PC-9 (cell line): ENCODE measurements at regions of chr22 and their contacts with region 1.

Region 1: GRCh38 chr22:37077884-37078485 is 26.4 kb downstream of the KCTD17 start:
- DNase-seq: peak in 1 of 2 experiments; percentile 74
- H3K4me3 ChIP-seq: no peak overlapping the region
- H3K27ac ChIP-seq: no peak overlapping the region
- H3K4me1 ChIP-seq: no peaks in the 10 kb centered on the region
- H3K27me3 ChIP-seq: peaks cover 43% of the 10 kb centered on the region
- CTCF ChIP-seq: peak; percentile 100

Region 2: GRCh38 chr22:36781656-36782627 is 296.0 kb before region 1 on chr22:
- CTCF ChIA-PET with region 1: no interaction called
- POLR2A ChIA-PET with region 1: no interaction called
- intact Hi-C with region 1: loop called (anchors 1 kb)
- DNase-seq: peak; percentile 80 to 93
- H3K4me3 ChIP-seq: no peak overlapping the region
- H3K27ac ChIP-seq: no peak overlapping the region
- H3K4me1 ChIP-seq: peaks cover 5% of the 10 kb centered on the region
- H3K27me3 ChIP-seq: peaks cover 9% of the 10 kb centered on the region
- CTCF ChIP-seq: peak; percentile 99

Region 3: GRCh38 chr22:37139762-37140161 is 61.8 kb after region 1 on chr22:
- CTCF ChIA-PET with region 1: no interaction called
- POLR2A ChIA-PET with region 1: no interaction called
- intact Hi-C with region 1: no loop called
- DNase-seq: no peak
- H3K4me3 ChIP-seq: no peak overlapping the region
- H3K27ac ChIP-seq: no peak overlapping the region
- H3K4me1 ChIP-seq: no peaks in the 10 kb centered on the region
- H3K27me3 ChIP-seq: no peaks in the 10 kb centered on the region; the same call in 1 of the 2 replicates
- CTCF ChIP-seq: no peak

Region 4: GRCh38 chr22:37166675-37167066 is 88.7 kb after region 1 on chr22:
- CTCF ChIA-PET with region 1: no interaction called
- POLR2A ChIA-PET with region 1: no interaction called
- intact Hi-C with region 1: loop called (anchors 1 kb)
- DNase-seq: peak; percentile 73 to 86
- H3K4me3 ChIP-seq: peak overlapping the region; percentile 12; the same call in 1 of the 2 replicates
- H3K27ac ChIP-seq: no peak overlapping the region
- H3K4me1 ChIP-seq: peaks cover 9% of the 10 kb centered on the region; the same call in 1 of the 2 replicates
- H3K27me3 ChIP-seq: no peaks in the 10 kb centered on the region
- CTCF ChIP-seq: peak; percentile 96

Region 5: DNA sequence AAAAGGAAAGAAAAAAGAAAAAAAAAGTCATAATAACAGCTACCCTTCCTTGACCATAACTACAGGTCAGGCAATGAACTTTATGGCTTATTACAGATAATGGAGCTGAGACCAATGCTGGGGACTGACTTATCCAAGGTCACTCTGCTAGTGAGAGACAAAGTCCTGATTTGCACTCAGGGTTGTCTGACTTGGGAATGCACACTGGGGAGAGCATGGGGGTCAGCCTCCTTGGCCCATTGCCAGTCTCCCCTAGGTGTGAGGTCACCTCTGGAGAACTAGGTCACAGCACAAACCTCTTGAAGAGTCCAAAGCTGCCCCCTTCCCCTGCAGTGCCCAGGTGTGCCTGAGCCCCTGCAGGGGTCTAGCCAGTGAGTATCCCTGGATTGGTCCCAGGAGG is 477.0 kb after region 1 on chr22:
- CTCF ChIA-PET with region 1: interaction called, 13 read pairs
- POLR2A ChIA-PET with region 1: no interaction called
- intact Hi-C with region 1: no loop called
- DNase-seq: no peak
- H3K4me3 ChIP-seq: no peak overlapping the region
- H3K27ac ChIP-seq: no peak overlapping the region
- H3K4me1 ChIP-seq: peaks cover 11% of the 10 kb centered on the region; the same call in 1 of the 2 replicates
- H3K27me3 ChIP-seq: no peaks in the 10 kb centered on the region
- CTCF ChIP-seq: no peak